CD4-positive, alpha-beta T cell (primary cell): ENCODE measurements at regions of chr3 and their contacts with region 1.

Region 1: GRCh38 chr3:197711973-197712707 is 24.6 kb downstream of the RUBCN start:
- DNase-seq: peak; percentile 71 to 97 (median 82)
- ATAC-seq: peak; percentile 98
- H3K4me3 ChIP-seq: peak overlapping the region; percentile 47
- H3K4me3 Mint-ChIP-seq: peak overlapping the region; percentile 80
- H3K27ac ChIP-seq: peak overlapping the region; percentile 74 to 87
- H3K27ac Mint-ChIP-seq: peak overlapping the region; percentile 88
- H3K4me1 ChIP-seq: peaks cover 9% of the 10 kb centered on the region
- H3K4me1 Mint-ChIP-seq: peaks cover 25% of the 10 kb centered on the region
- H3K27me3 ChIP-seq: no peaks in the 10 kb centered on the region
- H3K27me3 Mint-ChIP-seq: no peaks in the 10 kb centered on the region
- CTCF ChIP-seq: no peak

Region 2: DNA sequence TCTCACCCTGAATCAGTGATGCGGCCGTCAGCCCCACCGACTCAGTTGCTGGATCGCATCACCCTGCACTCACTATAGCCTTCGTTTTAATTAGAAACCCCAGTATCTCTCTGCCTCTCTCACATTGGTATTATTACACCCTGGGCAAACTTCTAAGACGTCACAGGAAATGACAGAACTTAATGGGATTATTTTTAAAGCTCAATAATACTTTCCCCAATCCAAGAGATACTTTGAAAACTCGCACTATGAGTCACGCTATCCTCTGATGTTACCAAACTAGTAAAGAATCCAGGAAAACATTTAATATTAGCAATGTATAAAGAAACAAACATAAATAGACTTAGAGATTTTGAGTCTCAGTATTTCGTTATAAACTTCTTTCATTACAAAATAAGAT is 12.0 kb before region 1 on chr3:
- CTCF ChIA-PET with region 1: interaction called, 4 read pairs
- POLR2A ChIA-PET with region 1: interaction called, 27 read pairs
- intact Hi-C with region 1: no loop called
- DNase-seq: no peak
- ATAC-seq: no peak
- H3K4me3 ChIP-seq: no peak overlapping the region
- H3K4me3 Mint-ChIP-seq: no peak overlapping the region
- H3K27ac ChIP-seq: no peak overlapping the region
- H3K27ac Mint-ChIP-seq: no peak overlapping the region
- H3K4me1 ChIP-seq: no peaks in the 10 kb centered on the region
- H3K4me1 Mint-ChIP-seq: no peaks in the 10 kb centered on the region
- H3K27me3 ChIP-seq: no peaks in the 10 kb centered on the region
- H3K27me3 Mint-ChIP-seq: no peaks in the 10 kb centered on the region
- CTCF ChIP-seq: no peak

Region 3: GRCh38 chr3:197736491-197737318 is 24.6 kb after region 1 on chr3 and contains the start of gene RUBCN:
- CTCF ChIA-PET with region 1: interaction called, 3 read pairs
- POLR2A ChIA-PET with region 1: interaction called, 38 read pairs
- intact Hi-C with region 1: loop called (anchors 1 kb)
- DNase-seq: peak; percentile 82 to 98 (median 90)
- ATAC-seq: peak; percentile 95
- H3K4me3 ChIP-seq: peak within 1 kb of the TSS; percentile 78
- H3K4me3 Mint-ChIP-seq: peak within 1 kb of the TSS; percentile 98
- H3K27ac ChIP-seq: peak within 1 kb of the TSS; percentile 68 to 72
- H3K27ac Mint-ChIP-seq: peak within 1 kb of the TSS; percentile 87
- H3K4me1 ChIP-seq: peaks cover 36% of the 10 kb centered on the region
- H3K4me1 Mint-ChIP-seq: peaks cover 36% of the 10 kb centered on the region
- H3K27me3 ChIP-seq: no peaks in the 10 kb centered on the region
- H3K27me3 Mint-ChIP-seq: no peaks in the 10 kb centered on the region
- CTCF ChIP-seq: no peak
- total RNA-seq, gene RUBCN: 35.3 to 38.9 TPM

Region 4: DNA sequence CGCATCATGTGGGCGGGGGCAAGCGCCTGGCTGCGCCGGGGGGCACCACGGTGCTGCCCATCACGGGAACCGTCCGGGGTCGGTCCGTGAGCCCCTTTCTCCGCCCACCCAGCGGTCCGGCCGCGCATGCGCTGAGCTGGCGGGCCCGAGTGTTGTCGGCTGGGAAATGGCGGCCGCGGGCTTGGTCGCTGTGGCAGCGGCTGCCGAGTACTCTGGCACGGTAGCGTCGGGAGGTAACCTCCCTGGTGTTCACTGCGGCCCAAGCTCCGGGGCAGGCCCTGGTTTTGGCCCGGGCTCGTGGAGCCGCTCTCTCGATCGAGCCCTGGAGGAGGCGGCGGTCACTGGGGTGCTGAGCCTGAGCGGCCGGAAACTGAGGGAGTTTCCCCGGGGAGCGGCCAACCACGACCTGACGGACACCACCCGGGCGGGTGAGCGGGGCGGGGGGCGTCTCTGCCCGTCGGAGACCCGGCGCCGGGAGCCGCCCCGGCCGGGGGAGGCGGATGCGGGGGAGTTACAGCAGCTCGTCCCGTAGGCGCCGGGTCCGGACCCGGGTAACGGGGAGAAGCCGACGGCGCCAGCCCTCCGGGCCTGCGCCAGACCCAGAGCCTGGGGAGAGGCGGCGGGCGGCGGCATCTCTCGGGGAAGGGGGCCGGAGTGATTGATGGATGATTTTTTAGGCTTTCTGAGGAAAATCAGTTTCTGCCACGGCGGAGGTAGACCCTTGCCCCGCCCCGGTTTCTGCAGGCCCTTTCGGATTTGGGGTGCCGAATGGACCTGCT is 79.2 kb after region 1 on chr3 and contains the start of gene LRCH3:
- CTCF ChIA-PET with region 1: no interaction called
- POLR2A ChIA-PET with region 1: interaction called, 37 read pairs
- intact Hi-C with region 1: loop called in 1 of 2 experiments (anchors 5 kb)
- DNase-seq: peak; percentile 68 to 90 (median 77)
- ATAC-seq: peak; percentile 72
- H3K4me3 ChIP-seq: peak within 1 kb of the TSS; percentile 97
- H3K4me3 Mint-ChIP-seq: peak within 1 kb of the TSS; percentile 95
- H3K27ac ChIP-seq: peak within 1 kb of the TSS; percentile 92 to 97
- H3K27ac Mint-ChIP-seq: peak within 1 kb of the TSS; percentile 98
- H3K4me1 ChIP-seq: peaks cover 25% of the 10 kb centered on the region
- H3K4me1 Mint-ChIP-seq: peaks cover 57% of the 10 kb centered on the region
- H3K27me3 ChIP-seq: no peaks in the 10 kb centered on the region
- H3K27me3 Mint-ChIP-seq: no peaks in the 10 kb centered on the region
- CTCF ChIP-seq: no peak
- total RNA-seq, gene LRCH3: 31.5 to 37.6 TPM